WTC11 (cell line): ENCODE measurements at regions of chr6 and their contacts with region 1.

Region 1: DNA sequence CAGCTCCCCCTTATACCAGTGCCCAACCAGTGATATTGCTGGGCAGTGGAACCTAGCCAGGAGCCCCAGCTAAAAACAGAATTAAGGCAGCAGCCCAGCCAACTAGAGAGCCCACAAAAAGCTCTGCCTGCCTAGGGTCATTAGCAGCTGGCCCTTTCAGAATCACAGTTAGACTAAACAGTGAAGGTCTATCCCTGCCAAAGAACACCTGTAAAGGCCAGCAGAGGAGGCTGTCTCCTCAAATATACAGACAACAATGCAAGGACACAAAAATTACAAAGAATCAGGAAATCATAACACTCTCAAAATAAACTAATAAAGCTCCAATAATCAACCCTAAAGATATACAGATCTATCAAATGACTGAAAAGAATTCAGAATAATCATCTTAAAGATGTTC is 77.8 kb upstream of the HTR1E start:
- DNase-seq: no peak
- ATAC-seq: no peak; the same call in 1 of the 2 replicates
- H3K4me3 Mint-ChIP-seq: no peak overlapping the region
- H3K27ac Mint-ChIP-seq: no peak overlapping the region
- H3K4me1 Mint-ChIP-seq: no peaks in the 10 kb centered on the region
- H3K27me3 Mint-ChIP-seq: peaks cover 2% of the 10 kb centered on the region; the same call in 1 of the 2 replicates
- CTCF ChIP-seq: no peak

Region 2: GRCh38 chr6:86937219-86938079 is 77.9 kb after region 1 on chr6 and contains the start of gene HTR1E:
- CTCF ChIA-PET with region 1: interaction called, 49 read pairs
- POLR2A ChIA-PET with region 1: no interaction called
- DNase-seq: no peak
- ATAC-seq: peak; percentile 63
- H3K4me3 Mint-ChIP-seq: peak within 1 kb of the TSS; percentile 73
- H3K27ac Mint-ChIP-seq: no peak within 1 kb of the TSS
- H3K4me1 Mint-ChIP-seq: peaks cover 13% of the 10 kb centered on the region
- H3K27me3 Mint-ChIP-seq: peaks cover 45% of the 10 kb centered on the region
- CTCF ChIP-seq: peak; percentile 72
- total RNA-seq, gene HTR1E: 0.09 TPM in 2 of 3 replicates, not detected in the other

Region 3: GRCh38 chr6:87016772-87017171 is 157.3 kb after region 1 on chr6:
- CTCF ChIA-PET with region 1: no interaction called
- POLR2A ChIA-PET with region 1: no interaction called
- DNase-seq: no peak
- ATAC-seq: no peak
- H3K4me3 Mint-ChIP-seq: no peak overlapping the region
- H3K27ac Mint-ChIP-seq: no peak overlapping the region
- H3K4me1 Mint-ChIP-seq: 0 out of 2 replicates have a peak, but pooled peaks cover 3% of the 10 kb centered on the region
- H3K27me3 Mint-ChIP-seq: no peaks in the 10 kb centered on the region
- CTCF ChIP-seq: no peak